CD4-positive, alpha-beta memory T cell (primary cell): ENCODE measurements at regions of chr21 and their contacts with region 1.

Region 1: GRCh38 chr21:45820171-45821091 is 161.1 kb upstream of the COL6A1 start:
- DNase-seq: peak; percentile 66 to 74 (median 71)
- H3K4me3 ChIP-seq: no peak overlapping the region
- H3K4me3 Mint-ChIP-seq: no peak overlapping the region
- H3K27ac ChIP-seq: no peak overlapping the region
- H3K27ac Mint-ChIP-seq: peak overlapping the region in 3 of 7 donors; percentile 30 to 73 (median 54)
- H3K4me1 ChIP-seq: peaks cover 7% of the 10 kb centered on the region
- H3K4me1 Mint-ChIP-seq: peaks cover 5 to 17% (median 11%) of the 10 kb centered on the region in 4 donors
- H3K27me3 ChIP-seq: no peaks in the 10 kb centered on the region
- H3K27me3 Mint-ChIP-seq: peaks cover 2 to 18% of the 10 kb centered on the region in 2 donors

Region 2: GRCh38 chr21:45287438-45288391 is 532.7 kb before region 1 on chr21 and contains the start of gene POFUT2:
- CTCF ChIA-PET with region 1: interaction called, 3 read pairs
- POLR2A ChIA-PET with region 1: no interaction called
- intact Hi-C with region 1: loop called (anchors 1 kb)
- DNase-seq: peak; percentile 95 to 100 (median 98)
- H3K4me3 ChIP-seq: peak within 1 kb of the TSS in 1 of 2 donors; percentile 63
- H3K4me3 Mint-ChIP-seq: peak within 1 kb of the TSS; percentile 78 to 96 (median 84)
- H3K27ac ChIP-seq: peak within 1 kb of the TSS; percentile 78
- H3K27ac Mint-ChIP-seq: peak within 1 kb of the TSS; percentile 87 to 97 (median 93)
- H3K4me1 ChIP-seq: peaks cover 14% of the 10 kb centered on the region
- H3K4me1 Mint-ChIP-seq: peaks cover 12 to 46% (median 24%) of the 10 kb centered on the region in 4 donors
- H3K27me3 ChIP-seq: no peaks in the 10 kb centered on the region
- H3K27me3 Mint-ChIP-seq: no peaks in the 10 kb centered on the region
- total RNA-seq, gene POFUT2: 40.1 to 40.8 TPM

Region 3: DNA sequence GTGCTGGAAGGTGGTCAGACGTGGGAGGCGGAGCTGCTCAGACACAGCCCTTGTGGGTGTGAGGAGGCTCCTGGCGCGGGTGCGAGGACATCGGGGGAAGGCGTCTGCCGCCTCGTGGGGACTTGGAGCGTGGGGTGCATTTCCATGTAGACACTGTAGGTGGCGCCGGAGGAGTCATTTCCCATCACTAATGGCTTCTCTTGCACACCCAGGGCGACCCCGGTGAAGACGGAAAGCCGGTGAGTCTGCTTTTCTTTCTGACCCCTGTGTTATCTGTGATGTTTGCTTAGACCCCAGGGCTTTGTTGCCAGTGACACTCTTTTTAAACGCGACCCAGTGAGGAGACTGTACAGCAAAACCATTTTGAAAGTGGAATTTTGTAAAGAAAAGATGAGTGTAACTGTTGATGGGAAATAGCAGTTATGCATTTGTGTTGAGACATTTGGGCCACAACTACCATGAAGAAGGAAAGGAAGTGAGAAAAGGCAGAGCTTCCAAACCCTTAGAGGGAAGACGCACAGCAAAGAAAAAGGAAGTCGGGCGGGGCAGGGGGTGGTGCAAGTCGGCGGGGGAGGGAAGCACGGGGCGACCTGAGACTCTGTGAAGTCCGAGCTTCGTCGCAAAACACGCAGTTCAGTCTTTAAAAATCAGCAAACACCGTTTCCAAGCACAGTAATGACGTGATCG is 342.2 kb before region 1 on chr21:
- CTCF ChIA-PET with region 1: no interaction called
- POLR2A ChIA-PET with region 1: no interaction called
- intact Hi-C with region 1: loop called (anchors 1 kb)
- DNase-seq: peak; percentile 80 to 83 (median 81)
- H3K4me3 ChIP-seq: peak overlapping the region; percentile 57 to 66
- H3K4me3 Mint-ChIP-seq: peak overlapping the region; percentile 85 to 94 (median 90)
- H3K27ac ChIP-seq: peak overlapping the region; percentile 41
- H3K27ac Mint-ChIP-seq: peak overlapping the region; percentile 88 to 99 (median 97)
- H3K4me1 ChIP-seq: peaks cover 34% of the 10 kb centered on the region
- H3K4me1 Mint-ChIP-seq: peaks cover 23 to 37% (median 32%) of the 10 kb centered on the region in 4 donors
- H3K27me3 ChIP-seq: no peaks in the 10 kb centered on the region
- H3K27me3 Mint-ChIP-seq: no peaks in the 10 kb centered on the region

Region 4: DNA sequence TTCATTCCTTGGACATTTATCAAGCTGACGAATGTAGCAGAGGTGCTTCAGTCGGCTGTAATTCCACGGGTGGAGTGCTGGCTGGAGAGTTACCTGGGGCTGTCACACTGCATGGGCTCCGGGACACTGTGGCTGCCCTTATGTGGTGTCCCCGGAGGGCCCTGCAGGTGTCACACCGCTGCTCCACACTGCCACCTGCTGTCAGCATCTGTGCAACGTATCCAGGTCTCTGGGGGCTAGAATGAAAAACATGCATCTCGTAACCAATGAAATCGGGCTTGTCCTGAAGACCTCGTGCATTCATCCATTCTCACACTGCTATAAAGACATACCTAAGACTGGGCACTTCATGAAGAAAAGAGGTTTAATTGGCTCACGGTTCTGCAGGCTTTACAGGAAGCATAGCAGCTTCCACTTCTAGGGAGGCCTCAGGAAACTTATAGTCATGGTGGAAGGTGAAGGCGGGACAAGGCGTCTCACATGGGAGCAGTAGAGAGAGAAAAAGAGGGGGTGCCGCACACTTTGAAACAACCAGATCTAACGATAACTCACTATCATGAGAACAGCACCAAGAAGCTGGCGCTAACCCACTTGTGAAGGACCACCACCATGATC is 223.6 kb before region 1 on chr21:
- CTCF ChIA-PET with region 1: no interaction called
- POLR2A ChIA-PET with region 1: no interaction called
- intact Hi-C with region 1: loop called (anchors 2 kb)
- DNase-seq: peak; percentile 75 to 79 (median 77)
- H3K4me3 ChIP-seq: no peak overlapping the region
- H3K4me3 Mint-ChIP-seq: no peak overlapping the region
- H3K27ac ChIP-seq: no peak overlapping the region
- H3K27ac Mint-ChIP-seq: peak overlapping the region in 6 of 7 donors; percentile 14 to 90 (median 83)
- H3K4me1 ChIP-seq: peaks cover 22% of the 10 kb centered on the region
- H3K4me1 Mint-ChIP-seq: peaks cover 16 to 21% (median 18%) of the 10 kb centered on the region in 4 donors
- H3K27me3 ChIP-seq: no peaks in the 10 kb centered on the region
- H3K27me3 Mint-ChIP-seq: peaks cover 0 to 3% of the 10 kb centered on the region in 2 donors

Region 5: DNA sequence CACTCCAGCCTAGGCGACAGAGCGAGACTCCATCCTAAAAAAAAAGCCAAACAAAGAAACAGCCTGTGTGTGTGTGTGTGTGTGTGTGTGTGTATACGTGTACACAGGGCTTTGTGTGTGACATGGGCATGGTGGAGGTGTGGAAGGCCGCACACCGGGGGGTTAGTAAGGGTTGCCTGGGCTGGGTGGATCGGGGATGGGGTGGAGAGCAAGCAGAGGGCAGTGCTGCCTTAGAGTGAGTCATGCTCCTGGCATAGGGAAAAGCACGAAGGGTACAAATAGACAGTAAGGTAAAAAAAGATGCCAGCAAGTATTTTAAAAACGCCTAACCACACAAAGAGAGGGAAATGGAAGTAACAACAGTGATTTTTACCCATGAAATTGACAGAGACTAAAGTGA is 821.2 kb after region 1 on chr21:
- CTCF ChIA-PET with region 1: no interaction called
- POLR2A ChIA-PET with region 1: no interaction called
- intact Hi-C with region 1: no loop called
- DNase-seq: no peak
- H3K4me3 ChIP-seq: no peak overlapping the region
- H3K4me3 Mint-ChIP-seq: peak overlapping the region in 3 of 8 donors; percentile 14 to 26 (median 22)
- H3K27ac ChIP-seq: no peak overlapping the region
- H3K27ac Mint-ChIP-seq: peak overlapping the region in 4 of 7 donors; percentile 42 to 82 (median 62)
- H3K4me1 ChIP-seq: peaks cover 46% of the 10 kb centered on the region
- H3K4me1 Mint-ChIP-seq: peaks cover 33 to 62% (median 53%) of the 10 kb centered on the region in 4 donors
- H3K27me3 ChIP-seq: no peaks in the 10 kb centered on the region
- H3K27me3 Mint-ChIP-seq: no peaks in the 10 kb centered on the region